CD8-positive, alpha-beta T cell (primary cell): ENCODE measurements at regions of chr5 and their contacts with region 1.

Region 1: DNA sequence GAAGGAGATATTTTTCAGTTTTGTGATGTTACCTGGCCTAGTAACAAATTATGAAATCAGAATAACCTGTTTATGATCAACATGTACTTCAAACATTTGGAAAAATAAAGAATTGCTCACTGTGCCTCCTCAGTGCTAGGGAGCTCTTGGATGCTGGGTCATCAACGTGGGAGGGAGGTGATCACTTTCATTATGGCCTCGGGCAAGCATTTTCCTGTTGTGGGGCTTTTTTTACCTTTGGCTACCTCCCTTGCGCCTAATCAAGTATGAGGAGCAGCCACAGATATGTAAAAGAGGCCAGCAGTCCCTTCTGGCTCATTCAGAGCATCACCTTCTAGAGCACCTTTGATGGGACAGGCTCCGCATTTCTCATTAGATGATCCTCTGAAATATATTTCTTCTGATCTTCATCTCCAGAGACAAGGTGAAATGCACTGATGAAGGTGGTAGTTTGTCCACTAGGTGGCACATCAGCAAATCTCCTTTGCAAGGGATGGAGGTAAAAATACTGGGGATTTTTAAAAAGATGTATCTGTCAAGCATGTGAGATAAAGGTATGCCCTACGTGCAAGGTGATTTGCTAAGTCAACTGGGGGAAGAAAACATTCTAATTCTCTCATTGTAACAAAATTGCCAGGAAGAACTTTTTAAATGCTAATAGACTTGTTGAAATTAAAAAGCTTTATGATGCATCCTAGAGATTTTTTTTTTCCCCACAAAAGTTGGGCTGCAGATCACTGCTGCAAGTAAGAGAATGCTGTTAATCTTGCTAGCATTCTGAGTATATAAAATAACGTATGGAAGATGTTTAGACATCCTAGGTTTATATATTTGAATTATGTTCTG is 218.2 kb downstream of the MAST4 start:
- DNase-seq: peak in 7 of 9 experiments; percentile 2 to 66 (median 38)
- ATAC-seq: no peak
- H3K4me3 ChIP-seq: no peak overlapping the region
- H3K4me3 Mint-ChIP-seq: no peak overlapping the region
- H3K27ac ChIP-seq: no peak overlapping the region
- H3K27ac Mint-ChIP-seq: no peak overlapping the region
- H3K4me1 ChIP-seq: no peaks in the 10 kb centered on the region
- H3K4me1 Mint-ChIP-seq: no peaks in the 10 kb centered on the region
- H3K27me3 ChIP-seq: no peaks in the 10 kb centered on the region
- H3K27me3 Mint-ChIP-seq: peaks cover 3% of the 10 kb centered on the region
- CTCF ChIP-seq: peak; percentile 82

Region 2: DNA sequence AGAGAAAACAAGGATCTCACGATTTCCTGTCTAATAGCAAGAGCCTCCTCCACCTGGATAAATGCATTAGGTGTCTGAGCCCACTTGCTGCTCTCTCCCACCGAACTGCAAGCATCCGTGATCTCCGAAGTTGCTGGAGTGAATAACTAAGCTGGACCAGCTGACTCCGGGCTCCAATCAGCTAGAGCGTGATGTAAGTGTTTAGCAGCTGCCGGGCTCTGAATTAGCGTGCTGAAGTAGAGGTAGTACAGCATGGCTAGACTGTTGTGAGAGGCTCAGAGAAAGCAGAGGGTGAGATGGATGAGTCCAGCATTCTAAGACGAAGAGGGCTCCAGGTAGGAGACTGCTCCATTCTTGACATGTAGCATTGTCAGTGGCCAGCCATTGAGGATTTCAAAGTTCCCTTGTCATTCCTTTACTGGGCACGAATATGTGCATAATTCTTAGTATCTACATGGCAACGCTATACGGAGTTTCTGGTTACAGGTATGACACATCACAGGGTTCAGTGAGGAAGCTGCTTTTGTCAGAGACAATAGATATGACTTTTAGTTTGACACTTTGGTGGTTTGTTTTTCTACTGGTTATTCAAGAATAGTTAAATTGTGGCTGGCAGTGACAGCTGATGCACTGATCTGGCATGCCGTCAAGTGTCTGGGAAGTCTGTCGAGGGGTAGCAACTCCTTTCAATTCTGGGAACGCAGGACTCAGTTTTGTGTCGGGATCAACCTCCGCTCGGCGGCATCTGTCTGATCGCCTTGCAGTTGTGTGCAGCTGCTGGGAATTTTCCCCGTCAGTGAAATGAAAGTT is 14.4 kb after region 1 on chr5:
- CTCF ChIA-PET with region 1: interaction called, 19 read pairs
- POLR2A ChIA-PET with region 1: no interaction called
- intact Hi-C with region 1: no loop called
- DNase-seq: peak; percentile 15 to 68 (median 55)
- ATAC-seq: peak; percentile 91
- H3K4me3 ChIP-seq: peak overlapping the region; percentile 17 to 40
- H3K4me3 Mint-ChIP-seq: peak overlapping the region; percentile 71
- H3K27ac ChIP-seq: no peak overlapping the region
- H3K27ac Mint-ChIP-seq: peak overlapping the region; percentile 68
- H3K4me1 ChIP-seq: peaks cover 11% of the 10 kb centered on the region
- H3K4me1 Mint-ChIP-seq: peaks cover 23% of the 10 kb centered on the region
- H3K27me3 ChIP-seq: peaks cover 0 to 2% of the 10 kb centered on the region in 2 experiments
- H3K27me3 Mint-ChIP-seq: peaks cover 34% of the 10 kb centered on the region
- CTCF ChIP-seq: no peak

Region 3: GRCh38 chr5:66864331-66864840 is 50.0 kb after region 1 on chr5:
- CTCF ChIA-PET with region 1: no interaction called
- POLR2A ChIA-PET with region 1: no interaction called
- intact Hi-C with region 1: loop called (anchors 1 to 5 kb)
- DNase-seq: peak in 2 of 9 experiments; percentile 37 to 40
- ATAC-seq: peak; percentile 17
- H3K4me3 ChIP-seq: no peak overlapping the region
- H3K4me3 Mint-ChIP-seq: no peak overlapping the region
- H3K27ac ChIP-seq: no peak overlapping the region
- H3K27ac Mint-ChIP-seq: no peak overlapping the region
- H3K4me1 ChIP-seq: no peaks in the 10 kb centered on the region
- H3K4me1 Mint-ChIP-seq: no peaks in the 10 kb centered on the region
- H3K27me3 ChIP-seq: peaks cover 0 to 2% of the 10 kb centered on the region in 2 experiments
- H3K27me3 Mint-ChIP-seq: peaks cover 20% of the 10 kb centered on the region
- CTCF ChIP-seq: no peak

Region 4: GRCh38 chr5:67149951-67150523 is 335.7 kb after region 1 on chr5:
- CTCF ChIA-PET with region 1: interaction called, 4 read pairs
- POLR2A ChIA-PET with region 1: no interaction called
- intact Hi-C with region 1: loop called (anchors 1 to 5 kb)
- DNase-seq: no peak
- ATAC-seq: no peak
- H3K4me3 ChIP-seq: no peak overlapping the region
- H3K4me3 Mint-ChIP-seq: no peak overlapping the region
- H3K27ac ChIP-seq: no peak overlapping the region
- H3K27ac Mint-ChIP-seq: no peak overlapping the region
- H3K4me1 ChIP-seq: no peaks in the 10 kb centered on the region
- H3K4me1 Mint-ChIP-seq: no peaks in the 10 kb centered on the region
- H3K27me3 ChIP-seq: no peaks in the 10 kb centered on the region
- H3K27me3 Mint-ChIP-seq: no peaks in the 10 kb centered on the region
- CTCF ChIP-seq: no peak

Region 5: GRCh38 chr5:67209142-67209771 is 394.9 kb after region 1 on chr5:
- CTCF ChIA-PET with region 1: interaction called, 12 read pairs
- POLR2A ChIA-PET with region 1: no interaction called
- intact Hi-C with region 1: loop called (anchors 1 to 5 kb)
- DNase-seq: peak; percentile 12 to 84 (median 61)
- ATAC-seq: peak; percentile 51
- H3K4me3 ChIP-seq: no peak overlapping the region
- H3K4me3 Mint-ChIP-seq: peak overlapping the region; percentile 13
- H3K27ac ChIP-seq: no peak overlapping the region
- H3K27ac Mint-ChIP-seq: peak overlapping the region; percentile 86
- H3K4me1 ChIP-seq: peaks cover 49% of the 10 kb centered on the region
- H3K4me1 Mint-ChIP-seq: peaks cover 58% of the 10 kb centered on the region
- H3K27me3 ChIP-seq: no peaks in the 10 kb centered on the region
- H3K27me3 Mint-ChIP-seq: no peaks in the 10 kb centered on the region
- CTCF ChIP-seq: peak; percentile 81